Endothelial cell of umbilical vein (primary cell): ENCODE measurements at regions of chr6 and their contacts with region 1.

Region 1: GRCh38 chr6:64732888-64733287 is 974.1 kb downstream of the EYS start:
- DNase-seq: peak; percentile 58
- H3K4me3 ChIP-seq: no peak overlapping the region
- H3K27ac ChIP-seq: no peak overlapping the region
- H3K4me1 ChIP-seq: no peaks in the 10 kb centered on the region
- H3K27me3 ChIP-seq: no peaks in the 10 kb centered on the region
- CTCF ChIP-seq: peak; percentile 9 to 34
- POLR2A ChIP-seq: no peak

Region 2: GRCh38 chr6:63923139-63923739 is 809.6 kb before region 1 on chr6:
- CTCF ChIA-PET with region 1: interaction called, 8 read pairs
- POLR2A ChIA-PET with region 1: no interaction called
- dilution Hi-C with region 1: no loop called
- intact Hi-C with region 1: loop called (anchors 1 kb)
- DNase-seq: peak; percentile 17
- H3K4me3 ChIP-seq: no peak overlapping the region
- H3K27ac ChIP-seq: no peak overlapping the region
- H3K4me1 ChIP-seq: no peaks in the 10 kb centered on the region
- H3K27me3 ChIP-seq: peaks cover 2% of the 10 kb centered on the region in 2 experiments
- CTCF ChIP-seq: peak; percentile 30 to 33
- POLR2A ChIP-seq: no peak

Region 3: DNA sequence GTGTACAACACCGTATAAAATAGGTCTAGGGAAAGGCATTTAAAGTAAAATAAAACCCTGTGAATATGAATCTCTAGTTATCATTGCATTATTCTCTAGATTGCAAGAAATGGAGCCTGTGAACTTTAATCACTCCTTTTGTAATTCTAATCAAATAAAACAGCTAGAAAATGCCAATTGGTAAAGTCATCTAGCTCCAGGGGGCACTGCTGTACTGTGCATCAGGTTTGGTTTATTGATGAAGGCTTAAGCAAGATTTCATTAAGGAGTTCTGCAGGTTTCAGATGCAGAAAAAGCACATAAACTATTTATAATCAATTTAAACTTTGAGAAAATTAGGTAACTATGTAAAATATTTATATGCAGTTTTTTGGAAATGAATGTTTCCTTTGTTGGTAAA is 452.3 kb before region 1 on chr6:
- CTCF ChIA-PET with region 1: interaction called, 19 read pairs
- POLR2A ChIA-PET with region 1: no interaction called
- dilution Hi-C with region 1: no loop called
- intact Hi-C with region 1: loop called (anchors 2 kb)
- DNase-seq: peak; percentile 45
- H3K4me3 ChIP-seq: no peak overlapping the region
- H3K27ac ChIP-seq: no peak overlapping the region
- H3K4me1 ChIP-seq: no peaks in the 10 kb centered on the region
- H3K27me3 ChIP-seq: no peaks in the 10 kb centered on the region
- CTCF ChIP-seq: peak in 1 of 2 donors; percentile 24
- POLR2A ChIP-seq: no peak

Region 4: DNA sequence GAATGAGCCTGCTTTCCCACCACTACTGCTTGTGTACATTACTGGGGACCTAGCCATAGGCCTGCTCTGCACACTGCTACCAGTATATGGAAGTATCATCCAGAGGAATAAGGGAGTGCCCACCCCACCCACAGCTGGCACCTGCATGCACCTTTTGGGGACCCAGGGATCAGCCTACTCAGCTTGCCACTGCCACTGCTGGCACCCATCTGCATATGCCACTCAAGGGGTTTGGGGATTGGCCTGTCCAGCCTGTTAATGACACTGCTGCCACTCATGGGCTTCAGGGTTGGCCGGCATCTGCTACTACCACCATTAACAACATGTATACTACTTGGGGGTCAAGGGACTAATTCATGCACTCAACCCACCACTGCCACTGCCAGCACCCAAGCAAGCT is 265.2 kb before region 1 on chr6:
- CTCF ChIA-PET with region 1: interaction called, 3 read pairs
- POLR2A ChIA-PET with region 1: no interaction called
- dilution Hi-C with region 1: no loop called
- intact Hi-C with region 1: loop called (anchors 2 kb)
- DNase-seq: no peak
- H3K4me3 ChIP-seq: no peak overlapping the region
- H3K27ac ChIP-seq: no peak overlapping the region
- H3K4me1 ChIP-seq: no peaks in the 10 kb centered on the region
- H3K27me3 ChIP-seq: no peaks in the 10 kb centered on the region
- CTCF ChIP-seq: no peak
- POLR2A ChIP-seq: no peak

Region 5: DNA sequence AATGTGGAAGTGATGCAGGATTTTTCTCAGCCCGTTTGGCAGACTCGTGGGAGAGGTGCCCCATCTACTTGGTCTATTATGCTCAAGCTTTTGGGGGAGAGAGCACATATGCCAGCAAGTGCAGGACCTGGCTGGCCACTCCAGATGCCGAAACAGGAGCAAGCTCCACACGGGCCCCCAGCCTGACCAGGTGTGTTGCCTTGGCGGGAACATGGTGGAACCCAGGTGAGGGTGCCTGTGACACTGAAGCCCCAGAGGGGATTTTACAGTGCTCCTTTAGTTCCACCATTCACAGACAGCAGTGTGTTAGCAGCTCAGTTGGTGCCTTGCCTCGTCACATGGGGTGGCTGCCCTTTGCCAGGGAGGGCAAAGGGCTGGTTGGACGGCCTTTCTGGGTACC is 175.2 kb after region 1 on chr6:
- CTCF ChIA-PET with region 1: no interaction called
- POLR2A ChIA-PET with region 1: no interaction called
- dilution Hi-C with region 1: no loop called
- intact Hi-C with region 1: no loop called
- DNase-seq: no peak
- H3K4me3 ChIP-seq: no peak overlapping the region
- H3K27ac ChIP-seq: no peak overlapping the region
- H3K4me1 ChIP-seq: peaks cover 14% of the 10 kb centered on the region
- H3K27me3 ChIP-seq: no peaks in the 10 kb centered on the region
- CTCF ChIP-seq: no peak
- POLR2A ChIP-seq: no peak

Region 6: GRCh38 chr6:64988148-64988547 is 255.3 kb after region 1 on chr6:
- CTCF ChIA-PET with region 1: no interaction called
- POLR2A ChIA-PET with region 1: no interaction called
- dilution Hi-C with region 1: no loop called
- intact Hi-C with region 1: no loop called
- DNase-seq: no peak
- H3K4me3 ChIP-seq: no peak overlapping the region
- H3K27ac ChIP-seq: no peak overlapping the region
- H3K4me1 ChIP-seq: no peaks in the 10 kb centered on the region
- H3K27me3 ChIP-seq: no peaks in the 10 kb centered on the region
- CTCF ChIP-seq: no peak
- POLR2A ChIP-seq: no peak